A673 (cell line): ENCODE measurements at regions of chr6 and their contacts with region 1.

Region 1: GRCh38 chr6:28648035-28648877 is 122.6 kb downstream of the GPX5 start:
- DNase-seq: peak; percentile 93
- H3K4me3 ChIP-seq: peak overlapping the region; percentile 70
- H3K27ac ChIP-seq: peak overlapping the region; percentile 74
- H3K4me1 ChIP-seq: peaks cover 7% of the 10 kb centered on the region
- H3K27me3 ChIP-seq: no peaks in the 10 kb centered on the region
- CTCF ChIP-seq: no peak

Region 2: DNA sequence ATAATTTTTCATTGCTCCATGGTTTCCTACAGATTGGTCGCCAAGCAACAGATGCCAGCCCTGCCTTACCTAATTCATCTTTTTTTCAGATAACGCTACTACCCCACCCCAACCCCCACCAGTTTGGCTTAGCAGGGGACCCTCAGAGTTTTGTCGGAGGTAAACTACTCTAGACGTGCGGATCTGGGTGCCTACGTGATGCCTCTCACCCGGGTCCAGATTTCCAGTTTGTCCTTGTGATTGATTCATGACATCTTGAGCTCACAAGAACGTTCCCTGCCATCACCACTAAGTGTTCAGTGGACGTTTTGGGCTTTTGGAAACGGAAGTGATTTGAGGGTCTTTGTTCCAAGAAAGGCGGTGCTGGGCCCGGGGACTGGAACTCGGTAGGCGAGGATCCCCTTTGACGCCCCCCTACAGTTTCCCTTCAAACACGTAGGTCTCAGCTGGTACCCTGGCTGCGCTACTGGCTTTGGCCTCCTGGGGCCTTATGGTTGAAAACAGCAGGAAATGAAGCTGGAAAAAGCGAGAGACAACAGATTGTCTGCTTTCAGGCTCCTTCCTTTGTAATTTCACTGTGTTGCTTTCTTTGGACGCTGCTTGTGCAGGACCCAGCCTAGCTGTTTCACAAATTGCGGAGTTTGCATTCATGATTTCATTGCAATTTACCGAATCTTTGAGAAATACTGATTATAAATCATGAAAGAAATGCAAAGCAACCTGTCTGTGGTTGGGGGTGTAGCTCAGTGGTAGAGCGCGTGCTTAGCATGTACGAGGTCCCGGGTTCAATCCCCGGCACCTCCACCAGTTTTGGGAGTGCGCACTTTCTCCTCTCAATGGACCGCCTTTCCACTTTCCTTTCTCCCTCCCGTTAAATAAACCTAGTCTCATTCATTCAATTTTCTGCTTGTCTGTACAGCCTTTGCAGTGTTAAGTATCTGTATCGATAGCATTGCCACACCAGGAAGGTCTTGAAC is 41.5 kb before region 1 on chr6:
- CTCF ChIA-PET with region 1: no interaction called
- POLR2A ChIA-PET with region 1: no interaction called
- intact Hi-C with region 1: loop called (anchors 2 kb)
- DNase-seq: peak; percentile 95
- H3K4me3 ChIP-seq: peak overlapping the region; percentile 54
- H3K27ac ChIP-seq: peak overlapping the region; percentile 79
- H3K4me1 ChIP-seq: peaks cover 13% of the 10 kb centered on the region
- H3K27me3 ChIP-seq: no peaks in the 10 kb centered on the region
- CTCF ChIP-seq: peak; percentile 42